ENCODE measurements at regions of chr16 and their contacts with region 1.

Region 1: DNA sequence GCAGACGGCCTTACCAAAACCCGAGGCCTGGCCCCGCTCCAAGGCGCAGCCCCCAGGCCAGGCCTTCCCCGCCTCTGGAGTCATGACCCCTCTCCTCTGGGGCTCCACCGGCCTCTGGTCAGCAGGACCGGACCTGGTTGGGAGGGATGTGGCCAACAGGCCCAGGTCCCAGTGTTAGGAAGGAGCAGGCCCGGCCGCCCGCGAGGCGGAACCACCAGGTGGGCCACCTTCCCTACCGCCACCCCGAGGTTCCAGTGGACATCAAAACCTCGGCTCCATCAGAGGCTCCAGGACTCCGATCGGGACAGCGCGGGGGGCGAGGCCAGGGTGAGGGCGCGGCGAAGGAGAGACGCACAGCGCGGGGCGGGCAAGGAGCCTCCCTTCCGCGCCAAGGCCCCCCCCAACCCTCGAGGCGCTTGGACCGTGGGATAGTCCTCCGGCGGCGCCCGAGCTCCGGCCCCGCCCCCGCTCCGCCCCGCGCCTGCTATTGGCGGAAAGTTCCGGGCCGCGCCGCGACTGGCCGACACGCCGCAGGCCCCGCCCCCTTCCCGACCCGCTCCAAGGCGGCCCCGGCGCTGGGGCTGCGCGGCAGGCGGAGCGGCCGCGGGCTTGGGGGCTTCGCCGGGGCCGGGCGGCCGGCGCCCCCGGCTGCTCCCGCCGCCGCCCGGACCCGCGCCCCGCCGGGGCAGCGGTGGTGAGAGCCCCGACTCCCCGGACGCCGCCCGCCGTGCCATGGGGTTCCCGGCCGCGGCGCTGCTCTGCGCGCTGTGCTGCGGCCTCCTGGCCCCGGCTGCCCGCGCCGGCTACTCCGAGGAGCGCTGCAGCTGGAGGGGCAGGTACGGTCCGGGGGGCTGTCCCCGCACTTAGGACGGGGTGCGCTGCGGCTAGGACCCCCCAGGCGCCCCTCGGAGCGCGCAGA is at the start of gene METRN:
- DNase-seq: peak; percentile 81 to 98
- H3K4me3 ChIP-seq: peak within 1 kb of the TSS; percentile 29
- CTCF ChIP-seq: no peak
- POLR2A ChIP-seq: no peak
- total RNA-seq, gene METRN: 24.2 to 48.4 (median 36.0) TPM

Region 2: GRCh38 chr16:782766-783403 is 68.1 kb after region 1 on chr16:
- intact Hi-C with region 1: loop called (anchors 5 kb)
- DNase-seq: no peak
- H3K4me3 ChIP-seq: no peak overlapping the region
- CTCF ChIP-seq: no peak
- POLR2A ChIP-seq: no peak

Region 3: GRCh38 chr16:1093284-1094123 is 378.7 kb after region 1 on chr16:
- intact Hi-C with region 1: loop called (anchors 10 kb)
- DNase-seq: no peak
- H3K4me3 ChIP-seq: no peak overlapping the region
- CTCF ChIP-seq: no peak
- POLR2A ChIP-seq: no peak